Ovary (tissue), 10 donors: ENCODE measurements at regions of chr1 and their contacts with region 1.

Region 1: DNA sequence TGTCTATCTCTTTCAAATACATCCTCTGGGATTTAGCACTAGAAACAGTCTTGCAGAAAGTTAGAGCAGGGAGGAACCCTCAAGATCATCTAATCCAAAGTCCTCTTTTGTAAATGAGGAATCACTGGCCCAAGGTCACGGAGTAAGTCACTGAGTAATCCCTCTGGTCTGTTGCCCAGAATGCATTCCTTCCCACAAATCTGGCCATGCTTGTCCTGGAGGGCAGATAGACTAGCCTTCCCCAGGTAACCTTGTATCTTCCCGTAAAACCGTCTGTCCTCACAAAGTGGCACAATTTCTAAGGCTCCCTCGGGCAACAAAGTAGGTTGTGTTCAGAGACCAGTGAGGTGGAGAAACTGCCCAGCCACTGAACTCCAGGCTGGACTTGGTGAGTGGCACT is 46.2 kb downstream of the DDR2 start:
- DNase-seq: peak; percentile 46 to 75 (median 57)
- H3K4me3 ChIP-seq: no peak overlapping the region
- H3K27ac ChIP-seq: peak overlapping the region; percentile 13 to 46
- H3K4me1 ChIP-seq: peaks cover 30% of the 10 kb centered on the region
- H3K27me3 ChIP-seq: no peaks in the 10 kb centered on the region
- CTCF ChIP-seq: no peak
- EP300 ChIP-seq: no peak
- POLR2A ChIP-seq: no peak

Region 2: DNA sequence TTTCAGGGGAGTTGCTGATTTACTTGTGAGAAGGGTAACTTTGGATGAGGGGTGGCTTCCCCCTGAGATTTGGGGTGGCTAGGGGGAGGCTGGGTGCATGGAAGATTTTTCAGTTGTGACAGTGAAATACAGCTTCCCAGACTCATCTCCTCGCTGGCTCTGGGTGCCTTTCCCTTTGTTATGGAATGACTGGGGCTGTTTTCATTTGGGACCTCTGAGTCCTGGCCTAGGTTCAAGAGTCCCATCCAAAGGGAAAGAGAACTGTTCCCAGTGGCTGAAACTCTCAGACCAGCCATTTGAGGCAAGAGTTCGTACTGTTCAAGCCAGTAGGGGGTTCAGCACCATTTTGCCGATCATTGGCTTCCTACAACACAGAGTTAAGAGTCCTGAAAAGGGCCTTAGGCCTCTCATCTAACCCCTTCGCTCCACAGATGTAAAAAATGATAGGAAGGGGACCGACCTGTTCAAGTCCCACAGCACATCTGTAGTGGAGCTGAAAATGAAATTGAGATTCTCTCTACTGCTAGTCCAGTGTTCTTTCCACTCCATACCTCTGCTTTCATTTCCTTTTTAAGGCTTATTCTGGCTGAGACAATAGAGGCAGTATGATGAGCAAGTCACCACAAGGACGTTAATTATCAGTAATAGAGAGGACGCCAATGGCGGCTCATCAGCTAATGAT is 45.2 kb before region 1 on chr1:
- intact Hi-C with region 1: loop called in 1 of 4 experiments (anchors 5 kb)
- DNase-seq: peak in 4 of 5 donors; percentile 39 to 55 (median 44)
- H3K4me3 ChIP-seq: peak overlapping the region; percentile 44
- H3K27ac ChIP-seq: peak overlapping the region; percentile 76 to 92
- H3K4me1 ChIP-seq: peaks cover 18% of the 10 kb centered on the region
- H3K27me3 ChIP-seq: no peaks in the 10 kb centered on the region
- CTCF ChIP-seq: no peak
- EP300 ChIP-seq: no peak
- POLR2A ChIP-seq: no peak

Region 3: DNA sequence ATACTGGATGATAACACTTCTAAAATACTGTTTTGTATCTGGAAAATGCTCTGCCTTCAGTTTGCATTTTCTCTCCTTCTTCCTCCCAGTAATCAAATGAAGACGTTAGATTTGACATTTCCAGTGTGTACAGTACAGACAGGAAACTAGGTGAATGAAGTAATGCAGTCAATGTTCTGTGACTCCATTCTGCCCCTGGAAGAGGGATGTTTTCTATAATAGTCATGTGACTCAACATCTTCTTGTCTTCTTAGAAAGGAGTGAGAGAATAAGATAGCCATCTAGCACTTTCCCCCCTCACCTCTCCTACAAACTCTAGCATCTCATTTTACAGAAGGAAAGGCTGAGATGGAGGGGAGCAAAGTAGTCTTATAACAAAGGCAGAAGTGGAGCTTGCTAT is 31.4 kb after region 1 on chr1:
- intact Hi-C with region 1: loop called in 1 of 4 experiments (anchors 2 kb)
- DNase-seq: no peak
- H3K4me3 ChIP-seq: no peak overlapping the region
- H3K27ac ChIP-seq: peak overlapping the region; percentile 9 to 78
- H3K4me1 ChIP-seq: peaks cover 35% of the 10 kb centered on the region
- H3K27me3 ChIP-seq: no peaks in the 10 kb centered on the region
- CTCF ChIP-seq: no peak
- EP300 ChIP-seq: no peak
- POLR2A ChIP-seq: no peak

Region 4: GRCh38 chr1:162835157-162835899 is 156.9 kb after region 1 on chr1:
- intact Hi-C with region 1: no loop called
- DNase-seq: no peak
- H3K4me3 ChIP-seq: no peak overlapping the region
- H3K27ac ChIP-seq: no peak overlapping the region
- H3K4me1 ChIP-seq: peaks cover 2% of the 10 kb centered on the region
- H3K27me3 ChIP-seq: no peaks in the 10 kb centered on the region
- CTCF ChIP-seq: no peak
- EP300 ChIP-seq: no peak
- POLR2A ChIP-seq: no peak